Esophagus squamous epithelium (tissue), 5 donors: ENCODE measurements at regions of chr22 and their contacts with region 1.

Region 1: DNA sequence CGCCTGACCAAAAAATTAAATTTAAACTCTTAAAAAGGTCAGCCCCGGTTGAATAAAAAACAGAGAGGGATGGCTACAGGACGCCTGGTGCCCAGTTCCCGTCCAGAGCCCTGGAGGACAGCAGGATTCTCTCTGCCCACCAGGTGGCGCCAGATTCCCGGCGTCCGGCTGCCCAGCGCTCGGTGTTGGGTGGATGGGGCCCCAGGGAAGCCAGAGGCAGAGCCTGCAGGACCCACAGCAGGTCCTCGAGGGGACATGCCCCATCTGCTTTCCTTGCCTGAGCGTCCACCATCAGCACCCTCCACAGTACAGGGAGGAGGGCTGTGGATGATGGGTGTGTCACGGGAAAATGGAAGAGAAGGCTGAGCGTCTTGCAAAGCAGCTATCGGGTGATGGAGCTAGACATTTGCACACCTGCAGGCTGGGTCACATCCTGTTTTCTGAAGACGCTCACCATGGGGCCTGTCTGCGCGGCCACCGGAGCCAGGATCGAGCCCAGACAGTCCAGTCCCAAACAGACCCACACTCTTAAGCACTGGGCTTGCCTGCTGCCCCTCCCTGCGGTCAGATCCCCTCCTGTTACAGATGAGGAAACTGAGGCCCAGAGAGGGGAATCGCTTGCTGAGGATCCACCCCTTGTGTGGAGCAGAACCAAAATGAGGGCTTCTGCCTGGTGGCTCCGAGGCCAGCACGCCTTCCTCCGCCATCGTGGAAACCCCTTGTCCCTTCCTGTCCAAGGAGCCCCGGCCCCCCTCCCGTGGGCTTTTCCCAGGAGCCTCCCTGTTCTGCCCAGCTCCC is 18.5 kb upstream of the CBX7 start:
- DNase-seq: no peak
- H3K4me3 ChIP-seq: peak overlapping the region in 1 of 4 donors; percentile 48
- H3K27ac ChIP-seq: no peak overlapping the region
- H3K4me1 ChIP-seq: peaks cover 23 to 56% (median 37%) of the 10 kb centered on the region in 3 donors
- H3K27me3 ChIP-seq: peaks cover 0 to 5% (median 0%) of the 10 kb centered on the region in 4 donors
- CTCF ChIP-seq: peak; percentile 95 to 99 (median 97)
- POLR2A ChIP-seq: no peak

Region 2: GRCh38 chr22:39078329-39078728 is 92.7 kb before region 1 on chr22:
- intact Hi-C with region 1: no loop called
- DNase-seq: no peak
- H3K4me3 ChIP-seq: peak overlapping the region in 1 of 4 donors; percentile 53
- H3K27ac ChIP-seq: peak overlapping the region in 1 of 4 donors; percentile 85
- H3K4me1 ChIP-seq: peaks cover 8 to 22% (median 10%) of the 10 kb centered on the region in 3 donors
- H3K27me3 ChIP-seq: no peaks in the 10 kb centered on the region
- CTCF ChIP-seq: no peak
- POLR2A ChIP-seq: no peak

Region 3: GRCh38 chr22:39309881-39310714 is 139.1 kb after region 1 on chr22:
- intact Hi-C with region 1: loop called (anchors 2 kb)
- DNase-seq: no peak
- H3K4me3 ChIP-seq: no peak overlapping the region
- H3K27ac ChIP-seq: peak overlapping the region; percentile 78 to 88 (median 85)
- H3K4me1 ChIP-seq: peaks cover 23 to 76% (median 48%) of the 10 kb centered on the region in 3 donors
- H3K27me3 ChIP-seq: no peaks in the 10 kb centered on the region
- CTCF ChIP-seq: no peak
- POLR2A ChIP-seq: no peak